ENCODE measurements at regions of chr11 and their contacts with region 1.

Region 1: DNA sequence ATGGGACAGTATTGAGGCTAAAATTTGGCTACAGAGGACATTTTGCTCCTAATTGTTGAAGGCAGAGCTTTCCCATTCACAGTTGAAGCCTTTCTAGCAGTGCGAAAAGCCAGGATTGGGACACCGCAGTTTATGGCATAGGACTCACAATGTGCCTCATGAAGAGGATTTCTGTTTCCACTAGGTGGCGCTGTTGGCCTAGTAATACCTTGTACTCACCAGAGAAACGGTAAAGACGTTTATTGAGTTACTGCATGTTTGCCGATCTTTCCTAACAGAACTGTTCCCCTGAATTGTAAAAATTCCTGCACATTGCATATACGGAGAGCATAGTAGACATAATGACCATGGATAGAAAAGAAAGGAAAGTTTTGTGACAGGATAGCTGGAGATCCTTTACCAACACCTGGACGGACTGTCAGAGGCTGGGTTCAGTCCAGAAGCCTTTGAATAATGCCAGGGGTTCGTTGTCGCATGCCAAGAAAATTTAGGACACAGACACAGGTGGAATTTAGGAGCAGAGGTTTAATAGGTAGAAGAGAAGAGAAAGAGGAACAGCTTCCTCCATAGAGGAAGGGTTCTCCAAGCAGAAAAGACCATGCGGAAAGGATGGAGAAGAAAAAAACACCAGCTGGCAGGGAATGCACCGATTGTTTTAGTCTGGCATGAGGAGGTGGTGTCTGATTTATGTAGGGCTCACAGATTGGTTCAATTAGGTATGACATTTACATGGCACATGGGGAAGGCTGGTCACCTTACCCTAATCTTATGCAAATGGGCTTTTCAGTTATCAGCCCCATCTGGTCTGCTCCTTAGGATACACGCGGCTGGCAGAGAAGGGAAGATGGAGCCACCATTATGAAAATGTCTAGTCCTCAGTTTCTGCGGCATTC is 10.8 kb upstream of the OR51D1 start:
- DNase-seq: peak; percentile 78
- H3K4me3 ChIP-seq: no peak overlapping the region
- H3K27ac ChIP-seq: no peak overlapping the region
- H3K4me1 ChIP-seq: no peaks in the 10 kb centered on the region
- H3K27me3 ChIP-seq: no peaks in the 10 kb centered on the region
- CTCF ChIP-seq: peak; percentile 73

Region 2: GRCh38 chr11:5004424-5005274 is 378.2 kb after region 1 on chr11:
- CTCF ChIA-PET with region 1: no interaction called
- POLR2A ChIA-PET with region 1: no interaction called
- intact Hi-C with region 1: loop called (anchors 1 kb)
- DNase-seq: peak; percentile 59
- H3K4me3 ChIP-seq: no peak overlapping the region
- H3K27ac ChIP-seq: no peak overlapping the region
- H3K4me1 ChIP-seq: no peaks in the 10 kb centered on the region
- H3K27me3 ChIP-seq: no peaks in the 10 kb centered on the region
- CTCF ChIP-seq: peak; percentile 65

Measured in A673 (cell line).